ENCODE measurements at regions of chr2 and their contacts with region 1.

Region 1: DNA sequence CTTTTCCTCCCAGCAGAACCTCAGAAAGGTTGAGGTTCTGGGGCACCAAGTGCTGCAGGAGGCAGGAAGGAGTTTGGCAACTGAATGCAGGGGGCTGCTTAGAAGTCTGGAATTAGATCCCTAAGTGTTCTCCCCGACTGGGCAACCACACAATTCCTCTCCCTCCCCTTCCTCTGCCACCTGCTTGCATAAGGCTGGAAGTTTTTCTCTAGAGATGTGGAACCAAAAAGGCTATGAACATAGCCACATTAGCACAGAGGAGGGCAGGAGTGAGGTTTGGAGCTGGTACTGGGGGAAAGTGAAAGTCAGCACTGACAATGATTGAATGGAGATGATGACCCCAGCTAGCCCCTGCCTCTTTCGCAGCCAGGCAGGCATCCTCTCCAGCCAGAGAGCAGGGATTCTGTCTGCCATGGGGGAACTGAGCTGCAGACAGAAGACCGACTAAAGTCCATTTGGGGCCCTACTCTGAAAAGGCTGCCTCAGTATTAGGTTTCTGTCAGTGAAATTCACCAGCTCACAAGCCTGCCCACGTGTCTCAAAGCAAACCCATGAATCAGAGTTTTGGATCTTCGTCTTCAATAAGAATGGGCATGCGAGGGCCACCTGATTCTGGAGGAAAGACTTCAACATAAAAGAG is 87.9 kb upstream of the ITGA6 start:
- DNase-seq: no peak

Region 2: DNA sequence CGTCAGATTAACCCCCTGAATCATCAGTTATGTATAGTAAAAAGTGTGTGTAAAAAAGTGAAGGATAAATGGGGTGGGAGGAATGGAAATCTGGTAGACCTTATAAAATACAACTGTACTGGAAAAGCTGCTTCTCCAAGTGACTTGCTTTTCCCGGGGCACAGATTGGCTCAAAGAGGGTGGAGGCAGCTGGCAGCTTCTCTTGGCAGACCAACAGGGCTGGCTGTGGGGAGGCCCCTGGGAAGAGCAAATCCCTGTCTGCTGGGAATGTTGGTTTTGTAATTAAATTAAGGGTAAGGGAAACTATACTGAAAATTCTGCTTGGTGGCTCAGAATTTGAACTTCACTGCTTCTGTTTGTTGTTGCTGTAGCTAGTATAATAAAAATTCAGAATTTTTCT is 82.6 kb before region 1 on chr2:
- intact Hi-C with region 1: no loop called
- DNase-seq: no peak

Region 3: DNA sequence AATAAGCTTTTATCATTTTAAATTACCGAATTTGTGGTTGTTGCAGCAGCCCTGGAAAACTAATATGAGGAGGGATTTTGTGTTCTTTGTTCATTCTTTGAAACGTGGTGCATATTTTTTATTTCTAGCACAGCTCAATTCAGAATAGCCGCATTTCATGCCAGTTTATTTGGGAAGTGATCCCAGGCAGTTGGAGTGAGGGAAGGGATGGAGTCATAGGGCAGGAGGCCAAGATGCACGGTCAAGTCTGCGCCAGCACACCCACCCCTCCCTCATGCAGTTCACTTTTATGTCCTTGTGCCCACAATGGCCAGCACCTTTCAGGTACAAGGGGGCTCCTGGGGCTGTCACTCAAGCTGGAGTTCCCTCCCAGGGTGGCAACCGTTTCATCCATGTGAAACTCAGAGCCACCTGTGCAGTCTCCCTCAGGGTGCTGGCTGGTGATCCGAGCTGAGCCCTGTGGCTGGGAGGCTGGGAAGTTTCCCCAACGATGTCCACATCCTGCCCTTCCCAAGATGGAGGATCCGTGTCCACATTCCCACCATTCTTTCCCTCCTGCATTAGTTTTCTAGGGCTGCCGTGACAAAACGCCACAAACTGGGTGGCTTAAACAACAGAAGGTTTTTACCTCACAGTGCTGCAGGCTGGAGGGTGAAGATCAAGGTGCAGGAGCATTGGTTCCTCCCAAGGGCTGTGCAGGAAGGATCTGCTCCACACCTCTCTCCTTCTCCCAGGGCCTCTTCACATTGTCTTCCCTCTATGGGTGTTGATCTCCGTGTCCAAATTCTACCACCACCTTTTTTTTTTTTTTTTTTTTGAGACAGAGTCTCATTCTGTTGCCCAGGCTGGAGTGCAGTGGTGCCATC is 19.4 kb after region 1 on chr2:
- intact Hi-C with region 1: no loop called
- DNase-seq: no peak

Region 4: GRCh38 chr2:172404824-172405223 is 65.3 kb after region 1 on chr2:
- intact Hi-C with region 1: loop called (anchors 5 kb)
- DNase-seq: no peak

Measured in cardiac septum (tissue), 1 donor.